MCF 10A (cell line): ENCODE measurements at regions of chr22 and their contacts with region 1.

Region 1: DNA sequence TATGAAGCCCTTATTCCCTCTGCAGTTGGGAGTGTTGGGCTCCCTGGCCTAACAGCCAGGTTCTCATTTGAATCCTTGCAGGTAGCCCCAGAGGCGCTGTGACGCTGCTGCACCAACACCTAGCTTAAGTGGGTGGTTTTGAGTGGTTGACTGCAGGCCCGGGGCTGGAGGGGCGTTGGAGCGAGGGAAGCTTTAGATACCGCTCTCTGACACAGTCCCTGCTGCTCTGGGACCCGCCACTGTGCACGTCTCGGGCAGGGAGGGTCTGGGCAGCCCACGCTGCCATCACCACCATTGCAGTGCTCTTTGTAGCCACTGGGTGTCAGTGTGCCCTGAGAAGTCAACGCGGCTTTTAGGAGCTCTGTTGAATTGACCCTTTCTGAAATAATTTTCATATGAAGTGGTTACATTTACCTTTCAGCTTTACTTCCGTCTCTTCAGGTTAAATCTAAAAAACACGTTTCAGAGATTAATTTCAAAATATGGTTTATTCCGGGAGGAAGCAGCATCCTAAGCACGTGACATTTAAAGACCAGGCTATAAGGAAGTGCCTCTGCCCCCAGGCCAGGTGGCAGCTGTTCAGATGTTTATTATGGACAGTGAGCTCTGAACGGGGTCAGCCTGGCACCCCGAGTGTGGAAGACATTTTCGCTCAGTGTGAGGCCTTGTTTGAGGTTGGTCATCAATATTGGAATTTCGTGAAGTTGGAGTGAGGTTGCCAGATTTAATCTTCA is 30.9 kb upstream of the PARVB start:
- DNase-seq: peak; percentile 55
- H3K4me3 Mint-ChIP-seq: no peak overlapping the region
- H3K27ac Mint-ChIP-seq: no peak overlapping the region
- H3K4me1 Mint-ChIP-seq: no peaks in the 10 kb centered on the region
- H3K27me3 Mint-ChIP-seq: no peaks in the 10 kb centered on the region
- CTCF ChIP-seq: peak; percentile 91

Region 2: GRCh38 chr22:43772831-43773230 is 220.4 kb before region 1 on chr22:
- CTCF ChIA-PET with region 1: no interaction called
- POLR2A ChIA-PET with region 1: no interaction called
- intact Hi-C with region 1: no loop called
- DNase-seq: no peak
- H3K4me3 Mint-ChIP-seq: no peak overlapping the region
- H3K27ac Mint-ChIP-seq: no peak overlapping the region
- H3K4me1 Mint-ChIP-seq: peaks cover 11% of the 10 kb centered on the region
- H3K27me3 Mint-ChIP-seq: no peaks in the 10 kb centered on the region
- CTCF ChIP-seq: no peak

Region 3: GRCh38 chr22:44003405-44004103 is 10.4 kb after region 1 on chr22:
- CTCF ChIA-PET with region 1: interaction called, 26 read pairs
- POLR2A ChIA-PET with region 1: interaction called, 6 read pairs
- intact Hi-C with region 1: no loop called
- DNase-seq: no peak
- H3K4me3 Mint-ChIP-seq: no peak overlapping the region
- H3K27ac Mint-ChIP-seq: no peak overlapping the region
- H3K4me1 Mint-ChIP-seq: no peaks in the 10 kb centered on the region
- H3K27me3 Mint-ChIP-seq: no peaks in the 10 kb centered on the region
- CTCF ChIP-seq: no peak

Region 4: GRCh38 chr22:44023404-44024287 is 30.5 kb after region 1 on chr22:
- CTCF ChIA-PET with region 1: interaction called, 15 read pairs
- POLR2A ChIA-PET with region 1: no interaction called
- intact Hi-C with region 1: no loop called
- DNase-seq: peak; percentile 8
- H3K4me3 Mint-ChIP-seq: peak overlapping the region; percentile 80
- H3K27ac Mint-ChIP-seq: peak overlapping the region; percentile 69
- H3K4me1 Mint-ChIP-seq: peaks cover 19% of the 10 kb centered on the region
- H3K27me3 Mint-ChIP-seq: no peaks in the 10 kb centered on the region
- CTCF ChIP-seq: no peak

Region 5: DNA sequence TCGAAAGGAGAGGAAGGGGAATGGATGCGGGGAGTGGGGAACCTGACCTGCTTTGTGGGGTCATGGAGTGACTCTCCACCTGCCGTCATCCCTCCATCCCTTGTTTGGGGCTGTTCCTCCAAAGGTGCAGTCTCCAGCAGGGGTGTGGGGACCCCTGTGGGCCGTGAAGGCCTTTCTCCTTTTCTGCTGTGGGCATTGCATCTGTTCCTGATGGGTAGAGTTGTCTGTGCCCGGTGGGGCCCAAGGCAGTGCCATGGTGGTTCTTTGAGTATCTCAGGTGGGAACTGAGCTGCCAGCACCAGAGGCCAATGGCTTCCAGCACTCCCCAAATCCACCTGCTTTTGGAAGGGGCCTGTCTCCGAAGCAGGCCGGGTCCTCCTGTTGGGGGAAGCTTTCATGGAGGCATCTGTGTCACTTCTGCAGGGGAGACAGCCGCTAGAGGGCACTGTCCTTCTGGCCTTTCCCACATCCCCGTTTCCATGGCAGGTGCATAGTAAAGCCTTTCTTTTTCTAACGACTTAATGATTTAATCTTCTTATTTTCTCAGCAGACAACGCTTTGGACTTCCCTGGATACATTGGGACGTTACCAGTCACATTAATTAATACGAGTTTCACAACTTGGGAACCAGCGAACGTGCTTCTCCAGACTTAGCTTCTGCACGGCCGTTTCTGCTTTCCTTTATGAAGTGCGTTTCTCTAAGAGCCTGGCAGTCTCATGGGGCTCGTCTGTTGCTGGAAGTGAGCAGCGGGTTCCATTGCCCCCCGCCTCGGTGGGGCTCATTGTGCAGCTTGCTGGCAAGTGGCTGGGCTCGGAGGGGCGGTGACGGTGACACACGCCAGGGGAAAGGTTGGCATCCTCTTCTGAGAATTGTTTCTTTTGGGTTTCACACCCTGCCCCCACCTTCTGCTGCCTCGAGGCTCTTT is 88.0 kb after region 1 on chr22:
- CTCF ChIA-PET with region 1: interaction called, 170 read pairs
- POLR2A ChIA-PET with region 1: interaction called, 15 read pairs
- intact Hi-C with region 1: loop called (anchors 1 kb)
- DNase-seq: peak; percentile 68
- H3K4me3 Mint-ChIP-seq: no peak overlapping the region
- H3K27ac Mint-ChIP-seq: no peak overlapping the region
- H3K4me1 Mint-ChIP-seq: peaks cover 8% of the 10 kb centered on the region
- H3K27me3 Mint-ChIP-seq: no peaks in the 10 kb centered on the region
- CTCF ChIP-seq: peak; percentile 77

Region 6: GRCh38 chr22:44625981-44626687 is 632.9 kb after region 1 on chr22:
- CTCF ChIA-PET with region 1: interaction called, 92 read pairs
- POLR2A ChIA-PET with region 1: no interaction called
- intact Hi-C with region 1: loop called (anchors 1 kb)
- DNase-seq: peak; percentile 67
- H3K4me3 Mint-ChIP-seq: no peak overlapping the region
- H3K27ac Mint-ChIP-seq: no peak overlapping the region
- H3K4me1 Mint-ChIP-seq: no peaks in the 10 kb centered on the region
- H3K27me3 Mint-ChIP-seq: peaks cover 27% of the 10 kb centered on the region
- CTCF ChIP-seq: peak; percentile 97